Caco-2 (cell line): ENCODE measurements at regions of chrX and their contacts with region 1.

Region 1: DNA sequence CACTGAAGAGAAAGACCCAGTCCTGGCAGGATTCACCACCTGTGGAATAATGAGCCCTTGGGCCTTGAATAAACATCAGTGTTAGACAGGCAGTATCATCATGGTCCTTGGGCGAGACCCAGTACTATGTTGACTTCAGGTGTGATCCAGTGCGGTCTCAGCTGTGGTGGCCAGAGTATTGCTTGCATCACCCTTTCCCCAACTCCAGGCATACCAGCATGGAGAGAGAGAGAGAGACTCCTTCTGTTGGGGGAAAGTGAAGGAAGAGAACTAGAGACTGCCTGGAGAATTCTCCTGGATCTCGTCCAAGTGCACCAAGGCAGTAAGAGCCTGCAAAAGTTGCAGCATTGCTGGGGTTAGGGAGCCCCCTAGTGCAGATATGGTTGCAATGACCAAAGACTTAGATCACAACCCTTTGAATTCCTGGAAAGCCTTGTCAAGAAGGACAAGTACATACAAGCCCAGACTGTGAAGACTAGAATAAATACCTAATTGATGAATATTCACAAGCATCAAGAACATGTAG is 61.1 kb upstream of the VAMP7 start:
- DNase-seq: peak; percentile 64 to 66
- H3K4me3 ChIP-seq: no peak overlapping the region
- H3K4me3 Mint-ChIP-seq: no peak overlapping the region
- H3K27ac Mint-ChIP-seq: no peak overlapping the region
- H3K4me1 ChIP-seq: no peaks in the 10 kb centered on the region
- H3K4me1 Mint-ChIP-seq: no peaks in the 10 kb centered on the region
- H3K27me3 ChIP-seq: no peaks in the 10 kb centered on the region
- H3K27me3 Mint-ChIP-seq: no peaks in the 10 kb centered on the region
- CTCF ChIP-seq: peak; percentile 47 to 55

Region 2: DNA sequence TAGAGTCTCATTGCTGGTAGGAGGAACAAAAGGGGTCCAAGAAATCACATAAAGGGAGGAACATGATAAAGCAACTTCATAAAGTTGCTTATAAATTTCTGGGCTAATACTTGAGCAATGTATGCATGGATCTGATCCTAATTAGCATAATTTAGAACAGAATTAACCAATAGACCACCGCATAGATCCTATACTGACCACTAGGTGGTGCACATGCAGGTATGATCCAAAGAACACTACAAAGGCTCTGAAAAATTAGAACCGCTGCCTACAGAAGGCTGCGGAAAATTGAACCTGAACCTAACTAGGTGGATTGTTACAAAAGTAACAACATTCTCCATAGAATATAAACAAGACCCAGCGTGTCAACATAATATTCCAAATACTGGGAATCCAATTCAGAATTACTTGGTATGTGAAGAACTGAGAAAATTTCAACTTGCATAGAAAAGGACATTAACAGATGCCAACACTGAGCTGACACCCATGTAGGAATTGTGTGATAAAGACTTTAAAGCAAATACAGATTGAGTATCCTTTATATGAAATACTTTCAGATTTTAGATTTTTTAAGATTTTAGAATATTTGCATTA is 725.5 kb before region 1 on chrX:
- CTCF ChIA-PET with region 1: no interaction called
- POLR2A ChIA-PET with region 1: no interaction called
- intact Hi-C with region 1: loop called (anchors 1 kb)
- DNase-seq: peak in 1 of 2 experiments; percentile 30
- H3K4me3 ChIP-seq: no peak overlapping the region
- H3K4me3 Mint-ChIP-seq: no peak overlapping the region
- H3K27ac Mint-ChIP-seq: no peak overlapping the region
- H3K4me1 ChIP-seq: no peaks in the 10 kb centered on the region
- H3K4me1 Mint-ChIP-seq: no peaks in the 10 kb centered on the region
- H3K27me3 ChIP-seq: no peaks in the 10 kb centered on the region
- H3K27me3 Mint-ChIP-seq: no peaks in the 10 kb centered on the region
- CTCF ChIP-seq: peak; percentile 33 to 38

Region 3: DNA sequence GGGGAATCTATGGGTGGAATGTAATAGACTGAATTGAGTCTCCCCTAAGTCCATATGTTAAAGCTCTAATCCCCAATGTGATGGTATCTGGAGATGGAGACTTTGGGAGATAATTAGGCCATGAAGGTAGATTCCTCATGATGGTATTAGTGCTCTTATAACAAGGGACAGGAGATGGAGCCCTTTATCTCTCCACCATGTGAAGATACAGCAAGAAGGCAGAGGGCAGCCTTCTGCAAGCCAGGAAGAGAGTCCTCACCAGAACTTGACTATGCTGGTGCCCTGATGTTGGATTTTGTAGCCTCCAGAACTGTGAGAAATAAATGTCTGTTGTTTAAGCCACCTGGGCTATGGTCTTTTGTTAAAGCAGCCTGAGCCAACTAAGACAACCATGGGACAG is 285.2 kb before region 1 on chrX:
- CTCF ChIA-PET with region 1: no interaction called
- POLR2A ChIA-PET with region 1: no interaction called
- intact Hi-C with region 1: loop called (anchors 5 kb)
- DNase-seq: no peak
- H3K4me3 ChIP-seq: no peak overlapping the region
- H3K4me3 Mint-ChIP-seq: no peak overlapping the region
- H3K27ac Mint-ChIP-seq: no peak overlapping the region
- H3K4me1 ChIP-seq: no peaks in the 10 kb centered on the region
- H3K4me1 Mint-ChIP-seq: no peaks in the 10 kb centered on the region
- H3K27me3 ChIP-seq: no peaks in the 10 kb centered on the region
- H3K27me3 Mint-ChIP-seq: no peaks in the 10 kb centered on the region
- CTCF ChIP-seq: no peak

Region 4: GRCh38 chrX:155662282-155662681 is 157.7 kb before region 1 on chrX:
- CTCF ChIA-PET with region 1: no interaction called
- POLR2A ChIA-PET with region 1: no interaction called
- intact Hi-C with region 1: loop called (anchors 5 kb)
- DNase-seq: no peak
- H3K4me3 ChIP-seq: no peak overlapping the region
- H3K4me3 Mint-ChIP-seq: no peak overlapping the region
- H3K27ac Mint-ChIP-seq: no peak overlapping the region
- H3K4me1 ChIP-seq: no peaks in the 10 kb centered on the region
- H3K4me1 Mint-ChIP-seq: no peaks in the 10 kb centered on the region
- H3K27me3 ChIP-seq: no peaks in the 10 kb centered on the region
- H3K27me3 Mint-ChIP-seq: peaks cover 9% of the 10 kb centered on the region
- CTCF ChIP-seq: peak in 1 of 2 experiments; percentile 21

Region 5: DNA sequence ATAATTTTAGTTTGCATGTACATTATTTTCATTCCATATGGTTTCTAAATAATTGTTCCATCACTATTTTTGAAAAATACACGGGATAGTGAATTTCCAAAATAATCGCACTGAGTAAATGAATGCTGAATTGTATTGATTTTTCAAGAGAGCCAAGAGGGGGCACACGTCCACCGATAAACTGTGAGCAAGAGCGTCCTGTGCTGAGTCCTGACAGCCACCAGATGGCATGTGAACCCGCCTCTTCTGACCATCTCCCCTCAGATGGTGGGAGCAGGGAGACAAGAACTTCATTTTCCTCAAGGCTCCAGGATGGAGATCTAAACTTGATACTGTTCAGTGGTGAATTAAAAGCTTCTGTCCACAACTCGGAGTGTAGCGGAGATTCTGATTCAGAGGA is 146.8 kb after region 1 on chrX:
- CTCF ChIA-PET with region 1: no interaction called
- POLR2A ChIA-PET with region 1: no interaction called
- intact Hi-C with region 1: no loop called
- DNase-seq: peak; percentile 21 to 40
- H3K4me3 ChIP-seq: no peak overlapping the region
- H3K4me3 Mint-ChIP-seq: no peak overlapping the region
- H3K27ac Mint-ChIP-seq: no peak overlapping the region
- H3K4me1 ChIP-seq: peaks cover 16% of the 10 kb centered on the region; the same call in 1 of the 2 replicates
- H3K4me1 Mint-ChIP-seq: no peaks in the 10 kb centered on the region
- H3K27me3 ChIP-seq: no peaks in the 10 kb centered on the region
- H3K27me3 Mint-ChIP-seq: no peaks in the 10 kb centered on the region
- CTCF ChIP-seq: peak in 1 of 2 experiments; percentile 46